SK-N-SH (cell line): ENCODE measurements at regions of chrX and their contacts with region 1.

Region 1: GRCh38 chrX:21725496-21725895 is 32.4 kb downstream of the SMPX start:
- DNase-seq: peak; percentile 31
- H3K4me3 ChIP-seq: no peak overlapping the region; a peak in 1 of 4 replicates
- H3K27ac ChIP-seq: no peak overlapping the region
- H3K4me1 ChIP-seq: peaks cover 0 to 4% of the 10 kb centered on the region in 2 experiments; a peak in 1 of 4 replicates
- H3K27me3 ChIP-seq: no peaks in the 10 kb centered on the region; the same call in 1 of the 2 replicates
- CTCF ChIP-seq: peak; percentile 64
- EP300 ChIP-seq: no peak
- RAD21 ChIP-seq: peak; percentile 80

Region 2: GRCh38 chrX:21479695-21480270 is 245.7 kb before region 1 on chrX:
- CTCF ChIA-PET with region 1: interaction called, 11 read pairs
- POLR2A ChIA-PET with region 1: no interaction called
- DNase-seq: peak; percentile 33
- H3K4me3 ChIP-seq: no peak overlapping the region
- H3K27ac ChIP-seq: no peak overlapping the region
- H3K4me1 ChIP-seq: peaks cover 0 to 2% of the 10 kb centered on the region in 2 experiments; a peak in 1 of 4 replicates
- H3K27me3 ChIP-seq: no peaks in the 10 kb centered on the region
- CTCF ChIP-seq: peak; percentile 72
- EP300 ChIP-seq: no peak
- RAD21 ChIP-seq: peak; percentile 81

Region 3: DNA sequence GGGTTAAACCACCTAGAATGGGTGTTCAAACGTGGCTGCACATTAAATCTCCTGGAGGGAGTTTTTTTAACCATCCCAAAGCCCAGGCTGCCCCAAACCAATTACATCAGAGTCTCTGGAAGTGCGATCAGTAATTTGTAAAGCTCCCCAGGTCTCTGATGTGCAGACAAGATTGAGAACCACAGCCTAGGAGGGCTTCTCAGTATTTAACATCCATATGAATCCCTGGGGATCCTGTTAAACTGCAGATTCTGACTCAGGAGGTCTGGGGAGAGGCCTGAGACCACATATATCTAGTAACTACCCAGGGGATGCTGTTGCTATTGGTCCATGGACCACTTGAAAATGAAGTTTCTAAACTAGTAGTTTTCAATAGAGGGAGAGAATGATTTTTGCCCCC is 10.2 kb before region 1 on chrX:
- CTCF ChIA-PET with region 1: interaction called, 12 read pairs
- POLR2A ChIA-PET with region 1: no interaction called
- DNase-seq: peak; percentile 24
- H3K4me3 ChIP-seq: no peak overlapping the region
- H3K27ac ChIP-seq: peak overlapping the region in 1 of 2 experiments; percentile 44; a peak in 1 of 4 replicates
- H3K4me1 ChIP-seq: peaks cover 0 to 7% of the 10 kb centered on the region in 2 experiments; a peak in 1 of 4 replicates
- H3K27me3 ChIP-seq: no peaks in the 10 kb centered on the region
- CTCF ChIP-seq: no peak
- EP300 ChIP-seq: no peak
- RAD21 ChIP-seq: no peak